ENCODE measurements at regions of chr19 and their contacts with region 1.

Region 1: DNA sequence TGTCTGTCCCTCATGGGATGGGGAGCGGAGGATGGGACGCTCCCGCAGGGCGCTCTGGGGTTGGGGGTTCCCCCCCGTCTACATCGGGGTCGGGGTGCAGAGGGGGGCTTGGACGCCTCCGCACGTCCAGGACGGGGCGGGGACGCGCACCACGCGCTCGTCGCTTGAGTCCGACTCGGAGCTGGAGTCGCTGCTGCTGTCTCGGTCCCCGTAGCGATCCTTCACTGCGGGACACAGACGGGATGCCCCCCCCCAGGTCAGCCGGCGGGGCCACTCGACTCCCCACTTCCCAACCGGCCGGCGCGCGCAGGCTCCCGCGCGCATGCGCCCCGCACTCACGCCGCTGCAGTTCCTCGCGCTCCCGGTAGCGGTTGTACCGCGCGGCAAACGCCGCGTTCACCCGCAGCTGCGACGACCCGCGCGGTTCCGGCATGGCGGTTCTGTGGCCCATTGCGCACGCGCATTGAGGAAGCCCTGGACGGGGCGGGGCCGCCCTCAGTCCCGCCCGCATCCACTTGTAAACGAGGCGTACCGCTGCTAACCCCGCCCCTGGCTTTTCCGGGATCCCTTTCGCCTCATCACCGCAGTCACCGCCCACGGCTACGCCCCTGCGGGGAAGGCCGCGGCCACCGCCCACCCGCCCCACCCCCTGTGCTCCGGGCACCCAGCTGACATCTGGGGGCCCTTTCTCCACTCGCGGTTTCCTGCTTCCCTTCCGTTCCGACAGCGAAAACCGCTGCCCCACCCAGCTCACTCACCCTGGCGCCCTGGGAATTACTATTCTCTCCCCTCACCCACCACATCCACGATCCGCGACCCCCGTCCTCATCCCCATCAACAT is at the start of gene KRI1:
- DNase-seq: peak; percentile 100
- ATAC-seq: peak; percentile 39
- H3K4me3 Mint-ChIP-seq: peak within 1 kb of the TSS; percentile 98
- H3K27ac Mint-ChIP-seq: peak within 1 kb of the TSS; percentile 94
- H3K4me1 Mint-ChIP-seq: peaks cover 34% of the 10 kb centered on the region
- H3K27me3 Mint-ChIP-seq: no peaks in the 10 kb centered on the region
- total RNA-seq, gene KRI1: 62.5 to 67.1 TPM

Region 2: GRCh38 chr19:10292206-10292788 is 273.5 kb before region 1 on chr19:
- CTCF ChIA-PET with region 1: interaction called, 3 read pairs
- POLR2A ChIA-PET with region 1: no interaction called
- intact Hi-C with region 1: loop called in 1 of 2 experiments (anchors 2 kb)
- DNase-seq: peak; percentile 92
- ATAC-seq: peak; percentile 63
- H3K4me3 Mint-ChIP-seq: peak overlapping the region; percentile 66
- H3K27ac Mint-ChIP-seq: no peak overlapping the region
- H3K4me1 Mint-ChIP-seq: peaks cover 59% of the 10 kb centered on the region
- H3K27me3 Mint-ChIP-seq: peaks cover 70% of the 10 kb centered on the region

Region 3: DNA sequence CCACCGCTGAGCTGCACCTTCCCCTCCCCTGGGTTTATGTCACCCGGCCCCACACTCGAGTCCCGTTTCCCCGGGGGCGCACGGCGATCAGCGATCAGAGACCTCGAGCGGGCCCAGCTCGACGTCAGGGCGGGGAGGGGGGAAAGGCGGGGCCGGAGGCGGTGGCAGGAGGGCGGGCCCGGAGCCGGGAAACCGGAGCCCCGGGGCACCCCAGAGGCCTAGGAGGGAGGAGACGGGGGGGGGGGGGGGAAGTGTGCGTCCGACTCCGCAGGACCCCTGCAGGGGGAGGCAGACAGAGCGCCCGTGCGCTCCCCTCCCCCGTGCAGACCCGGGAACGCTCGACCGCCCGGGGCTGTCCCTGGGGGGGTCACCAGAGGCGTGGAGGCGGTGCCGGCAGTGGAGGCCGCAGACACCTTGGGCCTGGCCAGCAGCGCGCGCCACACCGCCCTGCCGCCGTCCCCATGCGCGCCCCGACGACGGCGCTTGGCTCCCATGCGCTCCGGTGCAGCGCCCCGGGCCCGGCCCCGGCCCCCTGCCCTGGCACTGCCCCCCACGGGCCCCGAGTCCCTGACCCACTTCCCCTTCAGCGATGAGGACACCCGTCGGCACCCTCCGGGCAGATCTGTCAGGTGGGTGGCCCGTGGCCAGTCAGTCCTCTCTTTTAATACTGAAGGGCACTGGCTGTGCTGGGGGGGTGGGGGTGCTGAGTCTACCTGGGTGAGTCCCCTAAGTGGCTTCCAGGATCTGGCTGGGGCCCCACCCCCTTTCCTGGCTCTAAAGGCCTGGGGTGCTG is 133.6 kb before region 1 on chr19:
- CTCF ChIA-PET with region 1: no interaction called
- POLR2A ChIA-PET with region 1: no interaction called
- intact Hi-C with region 1: no loop called
- DNase-seq: peak; percentile 72
- ATAC-seq: peak; percentile 23
- H3K4me3 Mint-ChIP-seq: peak overlapping the region; percentile 53
- H3K27ac Mint-ChIP-seq: peak overlapping the region; percentile 55
- H3K4me1 Mint-ChIP-seq: peaks cover 38% of the 10 kb centered on the region
- H3K27me3 Mint-ChIP-seq: peaks cover 38% of the 10 kb centered on the region

Region 4: DNA sequence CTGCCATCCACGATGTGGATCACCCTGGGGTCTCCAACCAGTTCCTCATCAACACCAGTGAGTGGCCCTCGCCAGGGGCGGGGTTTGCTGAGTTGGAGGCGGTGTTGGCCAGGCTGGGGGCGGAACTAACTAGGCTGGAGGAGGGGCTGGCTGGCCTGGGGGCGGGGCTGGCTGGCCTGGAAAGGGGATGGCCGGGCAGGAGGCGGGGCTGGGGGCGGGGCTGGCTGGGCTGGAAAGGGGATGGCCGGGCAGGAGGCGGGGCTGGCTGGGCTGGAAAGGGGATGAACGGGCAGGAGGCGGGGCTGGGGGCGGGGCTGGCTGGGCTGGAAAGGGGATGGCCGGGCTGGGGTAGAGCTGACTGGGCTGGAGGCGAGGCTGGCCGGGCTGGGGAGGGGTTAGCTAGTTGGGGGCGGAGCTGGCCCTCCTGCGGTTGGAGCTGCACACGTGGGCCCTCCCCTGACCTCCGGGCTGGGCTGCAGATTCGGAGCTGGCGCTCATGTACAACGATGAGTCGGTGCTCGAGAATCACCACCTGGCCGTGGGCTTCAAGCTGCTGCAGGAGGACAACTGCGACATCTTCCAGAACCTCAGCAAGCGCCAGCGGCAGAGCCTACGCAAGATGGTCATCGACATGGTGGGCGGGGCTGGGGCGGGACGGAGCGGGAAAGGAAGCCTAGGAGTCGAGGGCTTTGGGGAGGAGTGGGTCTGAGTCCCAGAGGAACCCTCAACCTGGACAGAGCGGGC is 104.6 kb before region 1 on chr19:
- CTCF ChIA-PET with region 1: no interaction called
- POLR2A ChIA-PET with region 1: no interaction called
- intact Hi-C with region 1: loop called in 1 of 2 experiments (anchors 1 kb)
- DNase-seq: peak; percentile 98
- ATAC-seq: peak; percentile 98
- H3K4me3 Mint-ChIP-seq: peak overlapping the region; percentile 43
- H3K27ac Mint-ChIP-seq: no peak overlapping the region
- H3K4me1 Mint-ChIP-seq: peaks cover 9% of the 10 kb centered on the region
- H3K27me3 Mint-ChIP-seq: peaks cover 3% of the 10 kb centered on the region

Region 5: GRCh38 chr19:10587022-10587789 is 21.4 kb after region 1 on chr19 and contains the start of gene AP1M2:
- CTCF ChIA-PET with region 1: no interaction called
- POLR2A ChIA-PET with region 1: no interaction called
- intact Hi-C with region 1: no loop called
- DNase-seq: no peak
- ATAC-seq: no peak
- H3K4me3 Mint-ChIP-seq: no peak within 1 kb of the TSS
- H3K27ac Mint-ChIP-seq: no peak within 1 kb of the TSS
- H3K4me1 Mint-ChIP-seq: peaks cover 16% of the 10 kb centered on the region
- H3K27me3 Mint-ChIP-seq: peaks cover 7% of the 10 kb centered on the region
- total RNA-seq, gene AP1M2: not detected

Region 6: GRCh38 chr19:10602330-10603083 is 36.7 kb after region 1 on chr19:
- CTCF ChIA-PET with region 1: no interaction called
- POLR2A ChIA-PET with region 1: interaction called, 4 read pairs
- intact Hi-C with region 1: loop called in 1 of 2 experiments (anchors 1 kb)
- DNase-seq: peak; percentile 95
- ATAC-seq: peak; percentile 84
- H3K4me3 Mint-ChIP-seq: peak overlapping the region; percentile 95
- H3K27ac Mint-ChIP-seq: peak overlapping the region; percentile 99
- H3K4me1 Mint-ChIP-seq: peaks cover 24% of the 10 kb centered on the region
- H3K27me3 Mint-ChIP-seq: no peaks in the 10 kb centered on the region

Region 7: DNA sequence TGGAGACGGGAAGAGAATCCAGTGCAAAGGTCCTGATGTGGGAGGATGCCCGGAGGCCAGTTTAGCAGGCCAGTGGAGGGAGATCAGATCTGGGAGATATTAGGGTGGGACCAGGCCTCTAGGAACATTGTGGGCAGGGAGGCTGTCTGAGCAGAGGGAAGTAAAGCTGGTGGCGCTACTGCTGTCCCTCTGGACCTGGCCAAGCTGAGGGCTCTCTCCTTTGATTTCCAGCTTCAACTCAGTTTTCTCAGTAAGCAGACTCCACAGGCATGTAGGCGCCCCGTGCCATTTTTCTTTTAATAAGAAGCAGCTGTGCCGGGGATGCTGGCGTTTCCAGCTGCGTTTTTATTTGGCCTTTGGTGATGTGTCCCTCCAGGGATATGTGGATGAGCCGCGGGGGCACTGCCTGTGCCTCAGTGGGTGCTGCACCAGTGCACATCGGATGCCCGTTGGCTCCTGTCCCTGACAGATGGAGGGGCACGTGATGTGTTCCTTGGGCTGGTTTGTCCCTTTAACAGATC is 158.8 kb after region 1 on chr19:
- CTCF ChIA-PET with region 1: no interaction called
- POLR2A ChIA-PET with region 1: no interaction called
- intact Hi-C with region 1: no loop called
- DNase-seq: no peak
- ATAC-seq: no peak
- H3K4me3 Mint-ChIP-seq: no peak overlapping the region
- H3K27ac Mint-ChIP-seq: no peak overlapping the region
- H3K4me1 Mint-ChIP-seq: peaks cover 63% of the 10 kb centered on the region
- H3K27me3 Mint-ChIP-seq: no peaks in the 10 kb centered on the region

Region 8: DNA sequence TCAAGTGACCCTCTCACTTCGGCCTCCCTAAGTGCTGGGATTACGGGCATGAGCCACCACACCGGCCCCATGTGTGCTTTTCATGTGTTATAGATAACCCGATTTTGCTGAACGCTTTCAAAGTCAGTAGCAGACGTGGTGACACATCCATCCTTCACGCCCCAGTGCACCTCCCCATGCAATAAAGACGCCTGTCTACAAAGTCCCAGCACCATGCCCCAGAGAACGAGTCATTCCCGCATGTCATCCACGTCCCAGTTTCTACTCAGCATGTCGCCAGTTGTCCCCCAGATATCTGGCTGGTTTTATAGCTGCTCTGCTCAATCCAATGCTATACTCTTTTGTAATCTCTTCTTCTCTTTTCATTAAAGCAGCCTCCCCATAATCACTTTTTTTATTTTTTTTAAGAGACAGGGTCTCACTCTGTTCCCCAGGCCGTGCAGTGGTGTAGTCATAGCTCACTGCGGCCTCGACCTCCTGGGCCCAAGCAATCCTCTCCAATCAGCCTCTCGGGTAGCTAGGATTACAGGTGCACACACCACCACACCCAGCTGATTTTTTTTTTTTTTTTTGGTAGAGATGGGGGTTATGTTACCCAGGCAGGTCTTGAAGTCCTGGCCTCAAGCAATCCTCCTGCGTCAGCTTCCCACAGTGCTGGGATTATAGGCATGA is 194.6 kb after region 1 on chr19:
- CTCF ChIA-PET with region 1: no interaction called
- POLR2A ChIA-PET with region 1: no interaction called
- intact Hi-C with region 1: loop called in 1 of 2 experiments (anchors 1 kb)
- DNase-seq: peak; percentile 72
- ATAC-seq: peak; percentile 56
- H3K4me3 Mint-ChIP-seq: peak overlapping the region; percentile 70
- H3K27ac Mint-ChIP-seq: peak overlapping the region; percentile 84
- H3K4me1 Mint-ChIP-seq: peaks cover 83% of the 10 kb centered on the region
- H3K27me3 Mint-ChIP-seq: no peaks in the 10 kb centered on the region

Region 9: DNA sequence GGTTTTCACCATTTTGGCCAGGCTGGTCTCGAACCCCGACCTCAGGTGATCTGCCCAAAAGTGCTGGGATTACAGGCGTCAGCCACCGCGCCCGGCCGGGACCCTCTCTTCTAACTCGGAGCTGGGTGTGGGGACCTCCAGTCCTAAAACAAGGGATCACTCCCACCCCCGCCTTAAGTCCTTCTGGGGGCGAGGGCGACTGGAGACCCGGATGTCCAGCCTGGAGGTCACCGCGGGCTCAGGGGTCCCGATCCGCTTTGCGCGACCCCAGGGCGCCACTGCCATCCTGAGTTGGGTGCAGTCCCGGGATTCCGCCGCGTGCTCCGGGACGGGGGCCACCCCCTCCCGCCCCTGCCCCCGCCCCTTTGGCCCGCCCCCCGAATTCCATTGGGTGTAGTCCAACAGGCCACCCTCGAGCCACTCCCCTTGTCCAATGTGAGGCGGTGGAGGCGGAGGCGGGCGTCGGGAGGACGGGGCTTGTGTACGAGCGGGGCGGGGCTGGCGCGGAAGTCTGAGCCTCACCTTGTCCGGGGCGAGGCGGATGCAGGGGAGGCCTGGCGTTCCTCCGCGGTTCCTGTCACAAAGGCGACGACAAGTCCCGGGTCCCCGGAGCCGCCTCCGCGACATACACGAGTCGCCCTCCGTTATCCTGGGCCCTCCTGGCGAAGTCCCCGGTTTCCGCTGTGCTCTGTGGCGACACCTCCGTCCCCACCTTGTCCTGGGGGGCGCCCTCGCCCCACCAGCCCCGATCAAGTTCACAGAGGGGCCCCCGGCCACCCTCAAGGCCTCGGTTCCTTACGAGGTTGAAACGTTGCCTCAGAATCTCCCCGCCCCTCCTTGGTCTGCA is 524.5 kb after region 1 on chr19:
- CTCF ChIA-PET with region 1: no interaction called
- POLR2A ChIA-PET with region 1: no interaction called
- intact Hi-C with region 1: loop called in 1 of 2 experiments (anchors 5 kb)
- DNase-seq: peak; percentile 99
- ATAC-seq: peak; percentile 88
- H3K4me3 Mint-ChIP-seq: peak overlapping the region; percentile 93
- H3K27ac Mint-ChIP-seq: peak overlapping the region; percentile 97
- H3K4me1 Mint-ChIP-seq: peaks cover 51% of the 10 kb centered on the region
- H3K27me3 Mint-ChIP-seq: no peaks in the 10 kb centered on the region